CD8-positive, alpha-beta memory T cell (primary cell): ENCODE measurements at regions of chr5 and their contacts with region 1.

Region 1: GRCh38 chr5:180605554-180606214 is 14.4 kb upstream of the SCGB3A1 start:
- DNase-seq: peak; percentile 24 to 80 (median 39)
- H3K4me3 ChIP-seq: no peak overlapping the region
- H3K4me3 Mint-ChIP-seq: no peak overlapping the region
- H3K27ac ChIP-seq: no peak overlapping the region
- H3K27ac Mint-ChIP-seq: peak overlapping the region in 3 of 8 donors; percentile 42 to 95 (median 87)
- H3K4me1 ChIP-seq: no peaks in the 10 kb centered on the region
- H3K4me1 Mint-ChIP-seq: peaks cover 0 to 8% (median 5%) of the 10 kb centered on the region in 3 donors
- H3K27me3 ChIP-seq: no peaks in the 10 kb centered on the region
- H3K27me3 Mint-ChIP-seq: no peaks in the 10 kb centered on the region

Region 2: DNA sequence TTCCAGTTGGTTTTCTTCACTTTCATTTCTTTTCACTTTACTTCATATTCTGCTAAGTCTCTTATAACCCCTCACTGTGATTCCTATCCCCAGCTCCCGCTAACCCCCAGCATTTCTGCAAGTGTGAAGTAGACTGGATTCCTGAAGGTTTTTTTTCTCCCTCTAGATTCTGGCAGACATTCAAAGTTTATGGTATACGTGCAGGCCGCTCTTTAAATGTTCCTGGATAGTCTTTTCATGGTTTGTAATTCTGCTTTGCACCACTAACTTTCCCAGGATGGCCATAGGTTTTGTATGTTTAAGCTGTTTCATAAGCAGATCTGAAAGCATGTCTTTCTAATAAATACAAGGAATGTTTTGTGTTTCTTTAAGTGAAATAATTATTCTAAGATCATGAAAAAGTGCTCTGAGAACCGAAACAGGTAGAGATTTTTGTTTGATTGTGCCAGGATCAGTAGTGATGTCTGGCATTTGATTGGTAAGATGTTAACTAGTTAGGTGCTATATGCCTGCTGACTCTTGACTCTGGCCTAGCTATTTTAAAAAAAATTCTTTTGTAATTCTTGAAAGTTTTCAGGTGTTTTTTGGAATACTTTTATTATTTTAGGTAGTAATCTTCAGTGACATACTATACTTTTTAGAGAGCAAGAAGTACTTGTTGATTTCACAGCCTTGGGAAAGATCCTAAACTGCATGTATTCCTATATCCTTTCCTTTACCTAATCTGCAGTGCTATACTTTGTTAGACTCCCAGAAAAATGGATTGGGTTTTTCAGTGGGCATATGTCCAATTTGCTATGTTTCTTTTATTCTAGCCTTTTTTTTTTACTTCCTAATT is 81.8 kb before region 1 on chr5:
- CTCF ChIA-PET with region 1: interaction called, 14 read pairs
- POLR2A ChIA-PET with region 1: no interaction called
- DNase-seq: no peak
- H3K4me3 ChIP-seq: no peak overlapping the region
- H3K4me3 Mint-ChIP-seq: no peak overlapping the region
- H3K27ac ChIP-seq: no peak overlapping the region
- H3K27ac Mint-ChIP-seq: peak overlapping the region in 6 of 8 donors; percentile 41 to 84 (median 68)
- H3K4me1 ChIP-seq: peaks cover 40% of the 10 kb centered on the region
- H3K4me1 Mint-ChIP-seq: peaks cover 62 to 80% (median 72%) of the 10 kb centered on the region in 3 donors
- H3K27me3 ChIP-seq: no peaks in the 10 kb centered on the region
- H3K27me3 Mint-ChIP-seq: no peaks in the 10 kb centered on the region